HCT116 (cell line): ENCODE measurements at regions of chr7 and their contacts with region 1.

Region 1: GRCh38 chr7:100632951-100633717 is 8.2 kb downstream of the TFR2 start:
- DNase-seq: no peak
- ATAC-seq: peak; percentile 76
- H3K4me3 ChIP-seq: peak overlapping the region; percentile 54 to 67
- H3K27ac ChIP-seq: peak overlapping the region; percentile 67
- H3K4me1 ChIP-seq: peaks cover 6 to 28% of the 10 kb centered on the region in 2 experiments; a peak in 3 of 4 replicates
- H3K27me3 ChIP-seq: no peaks in the 10 kb centered on the region
- CTCF ChIP-seq: peak in 2 of 3 experiments; percentile 36 to 57; a peak in 3 of 6 replicates
- POLR2A ChIP-seq: no peak
- RAD21 ChIP-seq: no peak

Region 2: GRCh38 chr7:100483101-100483721 is 149.9 kb before region 1 on chr7:
- CTCF ChIA-PET with region 1: no interaction called
- POLR2A ChIA-PET with region 1: no interaction called
- RAD21 ChIA-PET with region 1: no interaction called
- intact Hi-C with region 1: no loop called
- DNase-seq: no peak
- ATAC-seq: peak; percentile 67
- H3K4me3 ChIP-seq: peak overlapping the region; percentile 52 to 67
- H3K27ac ChIP-seq: peak overlapping the region; percentile 77; the same call in 1 of the 2 replicates
- H3K4me1 ChIP-seq: peaks cover 14 to 58% of the 10 kb centered on the region in 2 experiments
- H3K27me3 ChIP-seq: no peaks in the 10 kb centered on the region
- CTCF ChIP-seq: peak in 2 of 3 experiments; percentile 70; a peak in 4 of 6 replicates
- POLR2A ChIP-seq: no peak
- RAD21 ChIP-seq: no peak

Region 3: GRCh38 chr7:100611974-100612729 is 21.0 kb before region 1 on chr7 and contains the start of gene MOSPD3:
- CTCF ChIA-PET with region 1: interaction called, 13 read pairs
- POLR2A ChIA-PET with region 1: interaction called, 6 read pairs
- RAD21 ChIA-PET with region 1: interaction called in 1 of 2 experiments, 3 read pairs
- intact Hi-C with region 1: no loop called
- DNase-seq: peak; percentile 99
- ATAC-seq: peak; percentile 97
- H3K4me3 ChIP-seq: peak within 1 kb of the TSS; percentile 73 to 89
- H3K27ac ChIP-seq: peak within 1 kb of the TSS; percentile 89
- H3K4me1 ChIP-seq: peaks cover 3 to 27% of the 10 kb centered on the region in 2 experiments
- H3K27me3 ChIP-seq: no peaks in the 10 kb centered on the region
- CTCF ChIP-seq: no peak
- POLR2A ChIP-seq: peak; percentile 59
- RAD21 ChIP-seq: no peak
- total RNA-seq, gene MOSPD3: 32.8 TPM

Region 4: DNA sequence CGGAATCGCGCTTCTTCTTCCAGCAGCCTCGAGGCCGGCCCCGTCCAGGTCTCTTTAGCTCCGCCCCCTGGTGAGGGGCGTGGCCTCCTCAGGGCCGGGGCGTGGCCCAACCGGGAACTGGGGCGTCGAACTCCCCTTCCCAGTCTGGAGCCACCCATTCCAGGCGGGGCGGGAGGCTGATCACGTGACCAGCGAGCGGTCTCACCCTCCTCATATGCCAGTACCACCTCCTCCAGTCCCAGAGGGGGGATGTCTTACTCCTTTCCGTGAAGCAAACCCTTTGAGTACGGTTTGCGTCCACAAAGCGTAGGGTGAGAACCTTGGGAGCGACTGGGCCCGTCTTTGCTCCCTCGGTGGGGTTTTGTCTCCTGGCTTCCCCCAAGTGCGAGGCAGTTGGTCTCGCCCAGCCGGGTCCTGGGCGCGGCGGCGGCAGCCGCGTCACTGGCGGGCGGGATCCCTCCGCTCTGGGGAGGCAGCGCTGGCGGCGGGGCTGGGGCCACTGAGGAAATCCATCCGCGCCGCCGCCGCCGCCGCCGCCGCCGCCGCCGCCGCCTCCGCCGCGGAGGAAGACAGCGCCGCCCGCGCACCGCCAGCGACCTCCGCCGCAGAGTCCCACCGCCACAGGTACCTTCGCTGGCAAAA is 40.3 kb after region 1 on chr7 and contains the start of gene GNB2:
- CTCF ChIA-PET with region 1: interaction called, 3 read pairs
- POLR2A ChIA-PET with region 1: no interaction called
- RAD21 ChIA-PET with region 1: interaction called, 4 read pairs
- intact Hi-C with region 1: loop called (anchors 2 kb)
- DNase-seq: peak; percentile 97
- ATAC-seq: peak; percentile 85
- H3K4me3 ChIP-seq: peak within 1 kb of the TSS; percentile 88 to 96
- H3K27ac ChIP-seq: peak within 1 kb of the TSS; percentile 95
- H3K4me1 ChIP-seq: peaks cover 0 to 11% of the 10 kb centered on the region in 2 experiments; a peak in 1 of 4 replicates
- H3K27me3 ChIP-seq: no peaks in the 10 kb centered on the region
- CTCF ChIP-seq: no peak
- POLR2A ChIP-seq: peak; percentile 31
- RAD21 ChIP-seq: no peak
- total RNA-seq, gene GNB2: 246 TPM

Region 5: DNA sequence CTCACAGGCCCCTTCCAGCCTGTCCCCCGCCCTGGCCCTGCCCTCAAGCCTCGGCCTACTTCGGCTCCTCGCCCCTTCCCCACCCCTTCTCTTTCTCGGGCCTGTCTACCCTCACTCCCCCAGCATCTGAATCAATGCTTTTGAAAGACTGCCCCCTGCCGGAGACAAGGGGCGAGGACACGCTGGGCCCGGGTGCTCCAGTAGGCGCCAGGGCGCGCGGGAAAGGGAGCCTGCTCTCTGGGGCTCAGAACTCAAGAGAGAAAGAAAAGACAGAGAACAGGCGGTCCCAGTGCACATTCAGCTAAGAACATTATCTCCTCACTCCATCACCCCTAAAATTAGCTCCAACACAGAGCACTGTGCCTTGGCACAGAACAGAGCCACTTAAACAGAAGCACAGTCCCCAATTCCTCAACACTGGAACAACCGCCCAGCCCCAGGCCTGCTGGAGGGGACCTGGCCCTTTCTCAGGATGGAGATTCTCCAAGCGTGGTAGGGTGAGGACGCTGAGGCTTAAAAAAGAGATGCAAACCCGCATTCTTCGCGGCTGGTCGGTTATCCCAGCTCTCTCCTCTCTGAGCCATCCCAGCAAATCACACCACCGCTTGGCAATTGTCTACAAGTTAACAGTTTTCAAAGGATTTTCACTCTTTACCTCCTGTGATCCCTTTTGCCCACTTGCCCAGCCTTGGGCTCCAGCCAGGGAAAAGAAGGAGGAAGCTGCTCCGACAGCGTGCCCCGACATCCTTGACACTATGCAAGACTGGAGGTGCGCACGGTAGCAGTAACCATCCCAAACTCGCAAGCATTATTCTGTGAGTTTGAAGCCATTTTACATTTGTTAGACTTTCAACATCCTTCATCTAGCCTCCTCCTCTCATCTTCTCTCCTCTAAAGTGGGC is 58.8 kb after region 1 on chr7:
- CTCF ChIA-PET with region 1: interaction called, 7 read pairs
- POLR2A ChIA-PET with region 1: no interaction called
- RAD21 ChIA-PET with region 1: no interaction called
- intact Hi-C with region 1: loop called (anchors 5 kb)
- DNase-seq: no peak
- ATAC-seq: peak; percentile 80
- H3K4me3 ChIP-seq: peak overlapping the region; percentile 87 to 89
- H3K27ac ChIP-seq: peak overlapping the region; percentile 47
- H3K4me1 ChIP-seq: peaks cover 18 to 33% of the 10 kb centered on the region in 2 experiments; a peak in 3 of 4 replicates
- H3K27me3 ChIP-seq: no peaks in the 10 kb centered on the region
- CTCF ChIP-seq: peak; percentile 89 to 94 (median 91)
- POLR2A ChIP-seq: no peak
- RAD21 ChIP-seq: peak; percentile 87